ENCODE measurements at regions of chr9 and their contacts with region 1.

Region 1: DNA sequence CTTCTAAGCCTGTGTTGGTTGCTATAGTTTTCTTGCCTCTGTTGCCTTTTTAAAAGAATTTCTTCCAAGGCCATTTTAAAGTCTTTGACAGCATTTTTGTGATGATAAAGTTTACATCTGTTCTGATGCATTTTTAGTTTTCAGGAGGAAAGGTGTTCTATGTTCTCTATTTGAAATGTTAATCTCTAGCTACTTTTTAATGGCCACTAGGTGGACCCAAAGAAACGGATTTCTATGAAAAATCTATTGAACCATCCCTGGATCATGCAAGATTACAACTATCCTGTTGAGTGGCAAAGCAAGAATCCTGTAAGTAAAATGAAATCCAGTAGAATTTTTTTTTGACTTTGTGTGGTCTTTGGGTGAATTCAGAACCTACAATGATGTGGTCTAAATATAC is 60.2 kb downstream of the MELK start:
- DNase-seq: peak; percentile 31
- H3K27ac ChIP-seq: no peak overlapping the region
- CTCF ChIP-seq: peak; percentile 86

Region 2: DNA sequence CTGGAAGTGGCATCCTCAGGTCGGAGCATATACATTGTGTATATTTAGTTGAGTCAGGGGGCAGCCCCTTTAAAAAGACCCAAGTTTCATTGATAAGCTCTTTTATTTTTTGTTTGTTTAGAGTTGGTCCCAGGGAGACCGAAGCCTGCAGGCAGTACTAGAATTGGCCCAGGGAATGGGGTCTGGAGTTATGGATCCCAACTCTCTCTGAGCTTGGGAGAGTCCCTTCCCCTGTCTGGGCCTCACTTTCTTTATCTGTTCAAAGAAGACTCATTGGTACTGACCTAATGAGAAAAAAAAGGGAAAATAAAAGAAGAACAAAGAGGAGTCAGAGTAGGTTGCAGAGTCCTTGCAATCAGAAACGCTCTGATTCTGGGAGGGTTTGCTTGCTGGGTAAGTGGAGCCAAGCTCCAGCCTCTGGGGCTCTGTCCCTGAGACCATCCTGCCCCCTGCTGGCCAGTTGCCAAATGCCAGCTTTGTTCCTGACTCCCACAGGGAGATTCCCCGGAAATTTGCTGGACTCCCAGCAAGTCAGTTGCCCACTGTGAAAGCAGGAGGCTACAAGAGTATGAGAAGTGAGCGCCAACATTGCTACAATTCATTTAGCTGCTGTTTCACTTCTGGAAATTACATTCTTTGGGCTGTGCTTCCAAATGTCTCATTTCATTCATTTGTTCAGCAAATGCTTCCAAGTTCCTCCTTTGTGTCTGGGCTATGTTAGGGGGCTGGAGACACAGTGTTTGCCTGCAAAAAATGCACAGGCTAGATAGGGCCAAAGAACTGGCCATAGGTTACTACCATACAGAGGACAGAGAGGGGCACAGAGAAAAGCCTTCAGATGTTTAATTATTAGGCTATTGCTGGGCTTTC is 96.0 kb after region 1 on chr9:
- CTCF ChIA-PET with region 1: interaction called, 11 read pairs
- POLR2A ChIA-PET with region 1: no interaction called
- DNase-seq: peak; percentile 64
- H3K27ac ChIP-seq: no peak overlapping the region
- CTCF ChIP-seq: peak; percentile 64

Region 3: GRCh38 chr9:36798350-36799065 is 165.6 kb after region 1 on chr9:
- CTCF ChIA-PET with region 1: no interaction called
- POLR2A ChIA-PET with region 1: no interaction called
- DNase-seq: peak; percentile 62
- H3K27ac ChIP-seq: no peak overlapping the region
- CTCF ChIP-seq: no peak; the same call in 1 of the 2 replicates